ENCODE measurements at regions of chr13 and their contacts with region 1.

Region 1: DNA sequence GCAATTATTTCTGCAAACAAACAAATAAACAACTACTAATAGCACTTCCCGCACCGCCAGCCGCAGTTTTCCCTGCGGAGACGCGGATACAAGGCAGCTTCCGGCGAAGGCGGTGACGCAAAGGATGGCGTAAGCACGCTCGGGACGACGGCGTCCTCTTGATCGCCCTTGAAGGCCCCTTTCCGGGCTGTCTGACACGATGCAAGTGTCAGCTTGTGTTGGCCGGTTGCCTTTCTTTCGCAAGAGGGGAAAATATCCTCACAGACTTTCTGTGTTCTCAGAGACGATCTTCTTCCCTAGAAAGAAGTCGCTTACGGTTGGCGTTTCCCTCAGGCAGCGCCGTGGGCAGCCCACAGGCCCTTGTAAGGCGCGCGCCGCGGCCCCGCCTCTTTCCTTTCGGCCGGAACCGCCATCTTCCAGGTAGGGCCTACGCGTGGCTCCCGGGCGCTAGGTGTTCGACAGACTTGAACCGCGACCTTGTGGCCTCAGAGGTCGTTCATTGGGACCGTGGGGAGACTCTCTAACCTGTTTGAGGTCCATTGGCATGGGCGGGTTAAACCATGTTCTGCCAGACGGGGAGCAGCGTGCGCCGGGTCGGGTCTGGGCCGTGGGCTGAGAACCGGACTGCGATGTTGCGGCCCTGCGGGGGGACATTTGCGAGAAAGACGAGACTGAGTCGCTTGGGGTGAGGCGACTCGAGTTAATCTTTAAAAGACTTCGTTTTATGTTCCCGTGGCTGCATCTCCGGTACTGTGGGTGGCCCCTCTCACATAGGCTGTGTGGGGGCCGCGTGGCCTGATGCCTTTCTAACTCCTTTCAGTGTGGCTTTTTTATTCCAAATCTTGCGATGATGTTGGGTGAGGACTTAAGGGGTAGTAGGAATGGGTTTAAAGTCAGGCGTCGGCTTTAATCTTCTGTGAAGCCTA is at the start of gene RPL21:
- DNase-seq: peak; percentile 85 to 97 (median 90)
- ATAC-seq: peak; percentile 89
- H3K4me3 ChIP-seq: peak within 1 kb of the TSS; percentile 69
- H3K4me3 Mint-ChIP-seq: peak within 1 kb of the TSS; percentile 95
- H3K27ac ChIP-seq: peak within 1 kb of the TSS; percentile 90 to 98
- H3K27ac Mint-ChIP-seq: peak within 1 kb of the TSS; percentile 99
- H3K4me1 ChIP-seq: peaks cover 23% of the 10 kb centered on the region
- H3K4me1 Mint-ChIP-seq: peaks cover 65% of the 10 kb centered on the region
- H3K27me3 ChIP-seq: no peaks in the 10 kb centered on the region
- H3K27me3 Mint-ChIP-seq: no peaks in the 10 kb centered on the region
- CTCF ChIP-seq: no peak
- total RNA-seq, gene RPL21: 2,736 to 2,941 TPM

Region 2: DNA sequence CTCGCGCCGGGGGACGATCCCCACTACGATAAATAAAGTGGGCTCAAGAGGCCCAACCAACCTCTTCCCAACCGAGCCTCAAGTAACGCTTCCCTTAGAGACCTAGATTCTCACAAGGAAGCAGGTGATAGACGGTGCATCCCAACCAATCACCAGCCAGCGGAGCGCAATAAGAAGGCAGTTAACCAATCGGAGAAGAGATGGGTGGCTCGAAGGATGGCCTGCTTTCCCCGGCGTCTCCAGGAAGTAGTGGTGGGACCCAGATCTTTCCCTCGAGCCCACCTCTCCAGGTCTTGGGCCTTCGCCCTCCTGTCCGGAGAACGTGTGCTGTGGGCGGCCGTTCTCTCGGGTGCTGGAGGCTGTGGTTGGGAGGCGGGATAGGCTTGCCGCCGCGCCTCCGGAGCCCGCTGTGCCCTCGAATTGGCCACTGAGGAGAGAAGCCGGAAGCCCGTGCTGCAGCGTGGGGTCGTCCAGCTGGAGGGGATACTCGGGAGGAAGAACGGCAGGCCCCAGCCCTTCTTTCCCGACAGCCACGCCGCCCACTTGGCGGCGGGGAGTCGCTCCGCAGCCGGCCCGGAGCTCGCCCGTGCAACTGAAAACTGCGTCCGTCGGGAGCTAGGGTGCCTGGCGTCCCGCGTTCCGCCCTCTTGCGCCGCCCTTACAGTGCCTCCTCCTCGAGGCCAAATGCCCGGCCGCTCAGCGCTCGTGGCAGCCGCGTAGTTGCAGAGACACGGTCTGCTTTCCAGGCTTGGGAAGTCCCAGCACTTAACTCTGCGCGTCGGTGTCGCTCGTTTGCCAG is 1029.5 kb before region 1 on chr13 and contains the start of gene RNF6:
- CTCF ChIA-PET with region 1: no interaction called
- POLR2A ChIA-PET with region 1: no interaction called
- intact Hi-C with region 1: loop called in 1 of 2 experiments (anchors 10 kb)
- DNase-seq: peak; percentile 75 to 96 (median 84)
- ATAC-seq: peak; percentile 94
- H3K4me3 ChIP-seq: peak within 1 kb of the TSS; percentile 84
- H3K4me3 Mint-ChIP-seq: peak within 1 kb of the TSS; percentile 99
- H3K27ac ChIP-seq: peak within 1 kb of the TSS; percentile 96
- H3K27ac Mint-ChIP-seq: peak within 1 kb of the TSS; percentile 89
- H3K4me1 ChIP-seq: peaks cover 17% of the 10 kb centered on the region
- H3K4me1 Mint-ChIP-seq: peaks cover 46% of the 10 kb centered on the region
- H3K27me3 ChIP-seq: no peaks in the 10 kb centered on the region
- H3K27me3 Mint-ChIP-seq: no peaks in the 10 kb centered on the region
- CTCF ChIP-seq: no peak
- total RNA-seq, gene RNF6: 46.5 to 49.5 TPM

Region 3: DNA sequence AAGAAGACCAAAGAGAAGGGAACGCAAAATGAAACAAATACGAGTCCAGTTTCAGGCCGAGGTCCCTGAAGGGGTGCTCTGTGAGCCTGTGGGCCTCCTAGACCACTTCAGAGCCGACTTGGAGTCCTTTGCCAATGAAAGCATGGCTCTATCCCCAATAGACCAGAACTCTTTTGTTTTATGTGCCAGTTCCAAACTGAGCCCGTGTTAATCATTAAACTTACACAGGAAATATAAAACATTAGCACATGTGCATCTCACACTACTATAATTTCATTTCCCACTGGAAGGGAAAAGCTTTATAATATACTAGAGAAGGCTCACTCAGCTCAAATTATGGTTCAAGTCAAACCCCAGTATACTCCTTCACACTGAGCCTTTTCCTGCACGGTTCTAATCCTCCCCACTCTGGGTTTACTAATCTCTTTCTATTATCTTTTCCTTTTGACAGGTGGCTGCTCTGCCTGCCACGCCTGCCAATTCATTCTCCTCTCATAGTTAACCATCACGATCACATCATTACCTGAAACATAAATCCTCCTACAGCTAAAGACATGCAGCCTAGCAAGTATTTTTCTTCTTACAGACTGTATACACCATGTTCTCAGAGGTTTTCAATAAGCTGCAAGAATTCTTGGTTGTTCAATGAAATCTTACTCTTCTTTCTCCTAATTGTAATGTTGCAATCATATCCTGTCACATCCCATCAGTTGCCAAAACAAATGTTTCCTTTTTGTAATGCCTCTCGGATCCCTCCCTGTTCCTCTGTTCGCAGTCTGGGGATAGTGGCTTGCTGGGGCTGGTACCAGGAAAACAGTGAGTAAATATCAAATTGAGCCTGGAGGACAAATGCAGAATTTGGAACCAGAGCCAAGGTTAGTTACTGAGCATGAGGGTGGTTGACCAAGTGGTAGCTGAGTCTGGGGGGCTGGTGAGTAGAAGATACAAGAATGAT is 712.8 kb before region 1 on chr13:
- CTCF ChIA-PET with region 1: no interaction called
- POLR2A ChIA-PET with region 1: no interaction called
- intact Hi-C with region 1: no loop called
- DNase-seq: no peak
- ATAC-seq: no peak
- H3K4me3 ChIP-seq: no peak overlapping the region
- H3K4me3 Mint-ChIP-seq: no peak overlapping the region
- H3K27ac ChIP-seq: no peak overlapping the region
- H3K27ac Mint-ChIP-seq: no peak overlapping the region
- H3K4me1 ChIP-seq: no peaks in the 10 kb centered on the region
- H3K4me1 Mint-ChIP-seq: no peaks in the 10 kb centered on the region
- H3K27me3 ChIP-seq: peaks cover 6 to 11% of the 10 kb centered on the region in 2 experiments
- H3K27me3 Mint-ChIP-seq: peaks cover 26% of the 10 kb centered on the region
- CTCF ChIP-seq: no peak

Region 4: DNA sequence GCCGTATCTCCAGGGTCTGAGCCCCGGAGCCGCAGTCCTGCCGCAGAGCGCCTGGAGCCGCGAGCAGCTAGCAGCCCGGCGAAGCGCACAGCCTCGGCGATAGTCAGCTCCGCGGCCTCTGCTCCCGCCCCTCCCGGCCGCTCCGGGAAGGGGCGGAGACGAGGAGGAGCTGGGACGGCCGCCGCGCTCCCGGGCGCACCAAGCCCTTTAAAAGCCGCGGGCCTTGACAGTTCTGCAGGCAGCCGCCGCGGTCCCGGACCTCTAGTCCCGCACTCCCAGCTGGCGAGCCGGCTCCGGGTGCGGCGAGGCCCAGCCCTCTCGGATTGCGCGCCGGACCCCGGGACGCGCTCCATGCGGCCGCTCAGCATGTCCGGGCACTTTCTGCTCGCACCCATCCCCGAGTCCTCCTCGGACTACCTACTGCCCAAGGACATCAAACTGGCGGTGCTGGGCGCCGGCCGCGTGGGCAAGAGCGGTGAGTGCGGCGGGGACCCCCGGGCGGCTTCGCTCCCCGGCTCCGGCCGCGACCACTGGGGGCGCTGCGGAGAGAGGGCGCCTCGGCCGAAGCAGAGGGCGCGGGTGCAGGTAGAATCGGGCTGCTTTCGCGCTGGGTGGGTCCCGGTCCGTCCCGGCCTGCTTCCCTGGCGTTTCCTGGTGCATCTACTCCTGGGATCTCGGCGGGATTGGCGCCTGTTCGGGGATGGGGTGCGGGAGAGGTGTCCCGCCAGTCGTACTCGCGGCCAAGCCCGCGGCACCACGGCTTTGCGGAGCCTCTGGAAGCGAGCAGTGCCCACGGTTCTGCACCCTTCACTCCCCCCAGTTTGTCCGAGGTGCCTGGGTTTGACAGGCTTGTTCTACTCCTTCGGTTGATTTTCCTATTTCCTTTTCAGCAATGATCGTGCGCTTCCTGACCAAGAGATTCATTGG is 19.4 kb after region 1 on chr13 and contains the start of gene RASL11A:
- CTCF ChIA-PET with region 1: interaction called, 4 read pairs
- POLR2A ChIA-PET with region 1: interaction called, 11 read pairs
- intact Hi-C with region 1: loop called (anchors 1 kb)
- DNase-seq: peak; percentile 52 to 85 (median 68)
- ATAC-seq: peak; percentile 91
- H3K4me3 ChIP-seq: peak within 1 kb of the TSS; percentile 73
- H3K4me3 Mint-ChIP-seq: peak within 1 kb of the TSS; percentile 92
- H3K27ac ChIP-seq: no peak within 1 kb of the TSS
- H3K27ac Mint-ChIP-seq: peak within 1 kb of the TSS; percentile 68
- H3K4me1 ChIP-seq: peaks cover 17% of the 10 kb centered on the region
- H3K4me1 Mint-ChIP-seq: peaks cover 34% of the 10 kb centered on the region
- H3K27me3 ChIP-seq: peaks cover 5 to 8% of the 10 kb centered on the region in 2 experiments
- H3K27me3 Mint-ChIP-seq: peaks cover 14% of the 10 kb centered on the region
- CTCF ChIP-seq: peak; percentile 99
- total RNA-seq, gene RASL11A: 2.9 to 4.7 TPM

Region 5: DNA sequence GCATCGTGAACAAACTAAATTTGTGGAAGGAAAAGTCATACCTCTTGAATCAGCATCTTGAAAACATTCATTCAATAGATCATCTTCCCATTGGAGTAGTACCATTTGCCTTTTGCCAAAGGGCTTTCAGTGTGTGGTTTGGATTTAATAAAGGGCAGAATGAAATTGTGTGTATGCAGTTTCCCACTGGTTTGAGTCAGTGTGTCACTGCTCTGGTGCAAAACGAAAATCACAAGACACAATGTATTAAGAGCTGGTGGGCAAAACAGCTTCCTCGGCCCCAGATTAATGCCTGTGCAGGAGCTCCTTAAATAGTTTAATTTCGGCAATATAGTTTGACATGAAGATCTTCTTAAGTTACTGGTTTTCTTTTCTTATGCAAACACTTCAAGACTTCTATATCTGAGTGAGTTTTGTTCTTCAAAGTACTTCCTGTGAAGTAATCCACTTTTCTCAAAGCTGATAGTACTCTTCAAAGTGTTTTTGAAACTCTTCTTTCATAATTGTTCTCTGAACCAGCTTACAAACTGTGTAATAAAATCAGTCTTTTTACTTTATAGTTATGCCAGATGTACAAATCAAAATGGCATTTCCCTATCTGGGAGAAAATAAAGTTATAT is 51.3 kb after region 1 on chr13:
- CTCF ChIA-PET with region 1: no interaction called
- POLR2A ChIA-PET with region 1: interaction called, 12 read pairs
- intact Hi-C with region 1: no loop called
- DNase-seq: peak in 3 of 14 experiments; percentile 14 to 19 (median 17)
- ATAC-seq: peak; percentile 72
- H3K4me3 ChIP-seq: no peak overlapping the region
- H3K4me3 Mint-ChIP-seq: peak overlapping the region; percentile 60
- H3K27ac ChIP-seq: no peak overlapping the region
- H3K27ac Mint-ChIP-seq: peak overlapping the region; percentile 86
- H3K4me1 ChIP-seq: peaks cover 4% of the 10 kb centered on the region
- H3K4me1 Mint-ChIP-seq: peaks cover 33% of the 10 kb centered on the region
- H3K27me3 ChIP-seq: peaks cover 0 to 3% of the 10 kb centered on the region in 2 experiments
- H3K27me3 Mint-ChIP-seq: no peaks in the 10 kb centered on the region
- CTCF ChIP-seq: no peak

Region 6: GRCh38 chr13:27424246-27425157 is 173.1 kb after region 1 on chr13 and contains the start of gene GTF3A:
- CTCF ChIA-PET with region 1: no interaction called
- POLR2A ChIA-PET with region 1: interaction called, 8 read pairs
- intact Hi-C with region 1: loop called (anchors 5 to 10 kb)
- DNase-seq: peak; percentile 69 to 97 (median 87)
- ATAC-seq: peak; percentile 53
- H3K4me3 ChIP-seq: peak within 1 kb of the TSS; percentile 79
- H3K4me3 Mint-ChIP-seq: peak within 1 kb of the TSS; percentile 90
- H3K27ac ChIP-seq: peak within 1 kb of the TSS; percentile 91 to 95
- H3K27ac Mint-ChIP-seq: peak within 1 kb of the TSS; percentile 95
- H3K4me1 ChIP-seq: peaks cover 50% of the 10 kb centered on the region
- H3K4me1 Mint-ChIP-seq: peaks cover 39% of the 10 kb centered on the region
- H3K27me3 ChIP-seq: no peaks in the 10 kb centered on the region
- H3K27me3 Mint-ChIP-seq: no peaks in the 10 kb centered on the region
- CTCF ChIP-seq: no peak
- total RNA-seq, gene GTF3A: 129 to 132 TPM

Region 7: GRCh38 chr13:28138012-28138755 is 886.8 kb after region 1 on chr13 and contains the start of gene PAN3:
- CTCF ChIA-PET with region 1: no interaction called
- POLR2A ChIA-PET with region 1: no interaction called
- intact Hi-C with region 1: loop called in 1 of 2 experiments (anchors 5 kb)
- DNase-seq: peak; percentile 85 to 97 (median 91)
- ATAC-seq: peak; percentile 50
- H3K4me3 ChIP-seq: peak within 1 kb of the TSS; percentile 81
- H3K4me3 Mint-ChIP-seq: peak within 1 kb of the TSS; percentile 95
- H3K27ac ChIP-seq: peak within 1 kb of the TSS; percentile 93 to 99
- H3K27ac Mint-ChIP-seq: peak within 1 kb of the TSS; percentile 99
- H3K4me1 ChIP-seq: peaks cover 37% of the 10 kb centered on the region
- H3K4me1 Mint-ChIP-seq: peaks cover 53% of the 10 kb centered on the region
- H3K27me3 ChIP-seq: no peaks in the 10 kb centered on the region
- H3K27me3 Mint-ChIP-seq: no peaks in the 10 kb centered on the region
- CTCF ChIP-seq: no peak
- total RNA-seq, gene PAN3: 56.9 to 59.5 TPM

Measured in CD4-positive, alpha-beta T cell (primary cell).